ENCODE measurements at regions of chr3 and their contacts with region 1.

Region 1: DNA sequence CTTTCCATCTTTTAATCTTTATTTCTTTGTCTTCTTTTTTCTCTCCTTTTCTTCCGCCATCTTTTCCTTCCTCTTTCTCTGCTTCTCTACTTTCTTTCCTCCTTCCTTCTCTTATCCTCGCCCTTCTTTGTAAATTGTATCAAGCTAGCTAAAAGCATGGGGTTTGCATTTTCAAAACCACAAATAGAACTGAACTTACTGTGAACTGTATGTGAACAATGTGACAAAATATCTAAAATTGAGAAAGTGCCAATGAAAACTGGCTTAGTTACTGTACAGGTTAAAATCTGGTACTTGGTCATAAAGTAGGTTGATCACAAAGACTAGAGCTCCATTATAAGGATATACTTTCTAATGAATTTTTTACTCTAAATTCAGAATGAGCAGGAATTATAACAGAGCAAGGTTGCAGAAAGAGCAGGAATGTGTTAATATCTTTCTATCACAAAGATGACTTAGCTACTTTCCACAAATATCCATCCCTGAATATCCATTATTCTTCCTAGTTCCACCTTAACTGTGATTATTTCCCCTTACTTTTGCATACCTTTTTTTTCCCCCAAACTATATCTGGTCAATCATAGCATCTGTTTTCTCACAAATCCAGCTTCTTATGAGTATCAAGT is 122.4 kb downstream of the LSAMP start:
- DNase-seq: peak; percentile 49
- H3K4me3 ChIP-seq: no peak overlapping the region
- CTCF ChIP-seq: no peak

Region 2: GRCh38 chr3:116288485-116288884 is 34.4 kb before region 1 on chr3:
- in situ Hi-C with region 1: loop called (anchors 5 kb)
- DNase-seq: peak; percentile 49
- H3K4me3 ChIP-seq: no peak overlapping the region
- CTCF ChIP-seq: no peak

Region 3: GRCh38 chr3:116413319-116413718 is 90.5 kb after region 1 on chr3:
- in situ Hi-C with region 1: no loop called
- DNase-seq: no peak
- H3K4me3 ChIP-seq: no peak overlapping the region
- CTCF ChIP-seq: no peak

Measured in astrocyte of the cerebellum (primary cell).